ENCODE measurements at regions of chr7 and their contacts with region 1.

Region 1: GRCh38 chr7:1418505-1419309 is 40.6 kb downstream of the MICALL2 start:
- DNase-seq: no peak
- H3K4me3 Mint-ChIP-seq: no peak overlapping the region
- H3K27ac Mint-ChIP-seq: no peak overlapping the region
- H3K4me1 Mint-ChIP-seq: peaks cover 25% of the 10 kb centered on the region
- H3K27me3 Mint-ChIP-seq: peaks cover 62% of the 10 kb centered on the region

Region 2: GRCh38 chr7:1432411-1433082 is 13.8 kb after region 1 on chr7:
- CTCF ChIA-PET with region 1: interaction called, 21 read pairs
- DNase-seq: peak; percentile 85
- H3K4me3 Mint-ChIP-seq: no peak overlapping the region
- H3K27ac Mint-ChIP-seq: no peak overlapping the region
- H3K4me1 Mint-ChIP-seq: peaks cover 2% of the 10 kb centered on the region
- H3K27me3 Mint-ChIP-seq: peaks cover 13% of the 10 kb centered on the region